ENCODE measurements at regions of chr1 and their contacts with region 1.

Region 1: GRCh38 chr1:15261155-15262002 is 14.4 kb downstream of the FHAD1 start:
- DNase-seq: no peak
- H3K4me3 Mint-ChIP-seq: peak overlapping the region; percentile 30
- H3K27ac Mint-ChIP-seq: no peak overlapping the region
- H3K4me1 Mint-ChIP-seq: peaks cover 15% of the 10 kb centered on the region
- H3K27me3 Mint-ChIP-seq: peaks cover 37% of the 10 kb centered on the region

Region 2: DNA sequence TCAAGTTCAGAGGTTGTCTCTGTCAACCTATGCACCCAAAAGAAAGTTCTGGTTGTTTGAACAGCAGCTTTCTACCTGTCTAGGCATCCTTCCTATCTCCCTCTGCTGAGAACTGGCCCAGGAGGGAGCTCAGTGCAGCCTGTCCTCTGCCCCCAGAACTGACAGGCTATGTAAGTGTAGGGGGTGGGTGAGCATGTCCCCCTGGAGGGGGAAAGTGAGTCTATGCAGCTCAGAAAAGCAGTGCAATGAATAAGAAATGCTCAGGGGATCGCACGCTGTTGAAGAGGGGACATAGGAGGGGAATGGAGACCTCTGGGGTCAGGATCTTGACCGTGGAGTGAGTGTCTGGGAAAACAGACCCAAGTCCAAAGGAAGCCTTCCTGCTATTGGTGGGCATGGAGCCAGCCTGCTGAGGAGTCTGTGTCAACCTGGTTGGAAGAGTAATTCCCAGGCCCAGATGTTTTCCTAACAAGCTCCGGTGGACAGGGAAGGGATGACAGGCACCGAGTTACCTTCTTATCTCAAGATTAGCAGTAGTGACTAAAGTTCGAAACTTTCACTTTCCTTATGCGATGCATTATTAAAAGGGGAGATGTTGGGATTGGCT is 40.5 kb before region 1 on chr1:
- intact Hi-C with region 1: loop called (anchors 5 kb)
- DNase-seq: no peak
- H3K4me3 Mint-ChIP-seq: no peak overlapping the region
- H3K27ac Mint-ChIP-seq: no peak overlapping the region
- H3K4me1 Mint-ChIP-seq: no peaks in the 10 kb centered on the region
- H3K27me3 Mint-ChIP-seq: peaks cover 27% of the 10 kb centered on the region

Region 3: GRCh38 chr1:15231714-15232201 is 29.6 kb before region 1 on chr1:
- intact Hi-C with region 1: no loop called
- DNase-seq: no peak
- H3K4me3 Mint-ChIP-seq: no peak overlapping the region
- H3K27ac Mint-ChIP-seq: peak overlapping the region; percentile 38
- H3K4me1 Mint-ChIP-seq: peaks cover 27% of the 10 kb centered on the region
- H3K27me3 Mint-ChIP-seq: peaks cover 12% of the 10 kb centered on the region

Measured in activated T-helper 2 cell treated with anti-CD3 and anti-CD28 coated beads, Interferon-gamma antibody, Interleukin-2, Interleukin-4, amounts not matched to agents 10 μg/mL and 5 μg/mL and 100 μg/mL, durations not matched to agents 14 hours and 24 hours and 36 hours (primary cell).